Activated B cell treated with CpG ODN at 0.5 μM for 24 hours (primary cell): ENCODE measurements at regions of chr20 and their contacts with region 1.

Region 1: DNA sequence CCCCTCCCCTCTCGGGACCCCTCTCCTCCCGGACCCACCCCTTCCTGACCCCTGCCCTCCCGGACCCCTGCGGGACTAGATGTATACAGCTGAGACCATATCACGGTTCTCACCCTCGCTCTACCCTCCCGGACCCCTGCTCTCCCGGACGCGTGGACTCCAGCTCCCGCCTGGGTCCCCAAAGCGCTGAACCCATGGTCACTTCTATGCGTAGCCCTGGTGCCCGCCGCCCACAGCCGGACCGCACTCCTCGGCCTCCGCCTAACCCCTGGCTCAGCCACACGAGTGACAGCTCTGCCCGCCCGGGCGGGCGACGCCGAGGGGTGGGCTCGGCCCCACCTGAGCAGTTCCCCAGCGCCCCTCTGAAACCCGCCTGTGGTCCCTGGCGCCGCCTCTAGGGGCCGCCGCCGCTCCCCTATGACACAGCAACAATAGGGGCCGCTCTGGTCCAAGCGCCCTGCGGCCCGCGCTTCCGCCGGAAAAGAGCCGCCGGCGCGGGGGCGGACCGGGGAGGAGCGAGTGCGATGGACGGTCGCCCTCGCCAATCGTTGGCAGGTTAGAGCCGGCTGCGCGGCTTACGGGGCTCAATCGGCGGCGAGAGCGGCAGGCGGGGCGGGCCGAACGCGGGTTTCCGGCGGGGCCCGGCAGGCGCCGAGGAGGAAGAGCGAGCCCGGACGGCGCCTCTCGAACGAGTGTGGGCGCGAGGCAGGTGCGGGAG is at the start of gene ADRM1:
- DNase-seq: peak; percentile 99
- ATAC-seq: peak; percentile 86
- H3K4me3 Mint-ChIP-seq: peak within 1 kb of the TSS; percentile 92
- H3K27ac Mint-ChIP-seq: peak within 1 kb of the TSS; percentile 96
- H3K4me1 Mint-ChIP-seq: peaks cover 30% of the 10 kb centered on the region
- H3K27me3 Mint-ChIP-seq: no peaks in the 10 kb centered on the region
- CTCF ChIP-seq: peak; percentile 32
- total RNA-seq, gene ADRM1: 97.9 and 98.0 TPM in 2 replicates

Region 2: GRCh38 chr20:62010551-62011402 is 291.7 kb before region 1 on chr20:
- CTCF ChIA-PET with region 1: interaction called, 3 read pairs
- POLR2A ChIA-PET with region 1: no interaction called
- intact Hi-C with region 1: loop called (anchors 2 kb)
- DNase-seq: peak; percentile 27
- ATAC-seq: peak; percentile 65
- H3K4me3 Mint-ChIP-seq: no peak overlapping the region
- H3K27ac Mint-ChIP-seq: no peak overlapping the region
- H3K4me1 Mint-ChIP-seq: peaks cover 6% of the 10 kb centered on the region
- H3K27me3 Mint-ChIP-seq: no peaks in the 10 kb centered on the region
- CTCF ChIP-seq: no peak

Region 3: DNA sequence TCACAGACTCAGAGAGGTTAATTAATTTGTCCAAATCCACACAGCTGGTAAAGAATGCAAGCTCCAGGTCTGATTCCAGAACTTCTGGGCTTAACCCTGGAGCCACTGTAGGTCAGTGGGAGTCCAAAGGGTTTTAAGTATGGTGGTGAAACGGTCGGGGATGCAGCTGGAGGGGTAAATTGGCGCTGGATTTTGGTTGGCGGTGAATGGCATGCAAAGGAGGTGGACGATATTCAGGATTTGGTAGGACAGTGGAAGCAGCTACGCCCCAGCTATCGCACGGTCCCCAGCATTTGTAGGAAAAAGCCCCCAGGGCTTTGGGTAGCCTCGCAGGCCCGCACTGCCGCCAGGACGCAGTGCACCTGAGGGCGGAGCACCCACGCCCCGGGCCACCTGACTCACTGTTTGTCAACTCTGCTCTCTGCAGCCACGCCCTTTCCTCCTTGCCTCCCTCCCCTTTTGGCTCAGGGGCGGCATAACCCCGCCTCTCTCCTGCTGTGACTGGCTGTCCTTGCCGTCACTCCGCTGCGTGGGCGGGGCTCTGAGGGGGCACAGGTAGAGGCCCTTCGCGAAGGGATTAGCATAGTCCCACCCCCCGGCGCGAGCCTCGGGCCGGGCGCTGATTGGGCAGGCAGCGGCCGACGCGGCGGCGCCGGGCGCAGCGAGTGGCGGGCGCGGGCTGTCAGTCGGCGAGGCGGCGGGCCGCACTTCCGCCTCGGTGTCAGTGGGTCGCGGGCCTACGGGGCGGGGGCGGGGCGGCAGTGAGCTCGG is 64.5 kb before region 1 on chr20 and contains the start of gene OSBPL2:
- CTCF ChIA-PET with region 1: no interaction called
- POLR2A ChIA-PET with region 1: no interaction called
- intact Hi-C with region 1: loop called (anchors 1 kb)
- DNase-seq: peak; percentile 100
- ATAC-seq: peak; percentile 98
- H3K4me3 Mint-ChIP-seq: peak within 1 kb of the TSS; percentile 81
- H3K27ac Mint-ChIP-seq: peak within 1 kb of the TSS; percentile 89
- H3K4me1 Mint-ChIP-seq: peaks cover 34% of the 10 kb centered on the region
- H3K27me3 Mint-ChIP-seq: no peaks in the 10 kb centered on the region
- CTCF ChIP-seq: no peak
- total RNA-seq, gene OSBPL2: 40.3 and 43.0 TPM in 2 replicates

Region 4: DNA sequence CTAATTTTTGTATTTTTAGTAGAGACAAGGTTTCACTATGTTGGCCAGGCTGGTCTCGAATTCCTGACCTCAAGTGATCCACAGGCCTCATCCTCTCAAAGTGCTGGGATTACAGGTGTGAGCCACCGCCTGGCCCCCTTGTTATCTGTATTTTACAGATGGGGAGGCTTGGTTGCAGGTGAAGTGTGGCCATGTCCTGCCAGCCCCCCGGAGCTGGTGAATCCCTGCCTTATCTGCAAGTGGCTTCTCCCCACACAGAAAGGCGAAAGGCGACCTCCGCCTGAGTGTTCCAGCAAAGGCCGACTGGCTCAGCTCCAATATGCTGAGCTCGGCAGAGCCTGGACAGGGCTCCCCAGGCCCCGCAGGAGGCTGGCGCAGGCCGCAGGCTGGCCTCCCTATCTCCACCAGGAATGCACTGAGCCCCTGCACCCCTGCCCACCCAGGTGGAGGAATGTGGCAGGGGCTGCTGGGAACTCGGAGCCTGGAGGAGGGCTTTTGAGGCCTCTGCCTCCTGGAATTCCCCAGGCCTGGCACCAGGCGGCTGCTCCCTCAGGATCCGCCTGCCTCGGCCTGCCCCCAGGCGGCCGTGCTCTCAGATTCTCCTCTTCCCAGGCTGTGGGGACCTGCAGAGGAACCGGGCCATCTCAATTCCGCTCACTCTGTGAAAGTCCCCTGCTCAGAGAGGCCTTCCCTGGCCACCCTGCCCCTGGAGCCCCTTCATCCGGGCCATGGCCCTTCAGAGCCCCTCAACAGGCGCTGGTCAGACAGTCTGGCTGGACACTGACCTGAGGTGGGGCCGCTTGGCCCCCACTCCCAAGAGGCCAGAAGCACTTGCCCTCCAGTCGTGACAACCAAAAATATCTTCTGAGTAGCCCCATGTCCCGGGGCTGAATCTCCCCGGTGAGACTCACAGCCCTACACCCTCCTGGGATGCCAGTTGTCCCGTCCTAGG is 73.9 kb after region 1 on chr20:
- CTCF ChIA-PET with region 1: interaction called, 11 read pairs
- POLR2A ChIA-PET with region 1: interaction called, 5 read pairs
- intact Hi-C with region 1: loop called (anchors 2 kb)
- DNase-seq: no peak
- ATAC-seq: no peak
- H3K4me3 Mint-ChIP-seq: no peak overlapping the region
- H3K27ac Mint-ChIP-seq: no peak overlapping the region
- H3K4me1 Mint-ChIP-seq: peaks cover 5% of the 10 kb centered on the region
- H3K27me3 Mint-ChIP-seq: no peaks in the 10 kb centered on the region
- CTCF ChIP-seq: no peak

Region 5: DNA sequence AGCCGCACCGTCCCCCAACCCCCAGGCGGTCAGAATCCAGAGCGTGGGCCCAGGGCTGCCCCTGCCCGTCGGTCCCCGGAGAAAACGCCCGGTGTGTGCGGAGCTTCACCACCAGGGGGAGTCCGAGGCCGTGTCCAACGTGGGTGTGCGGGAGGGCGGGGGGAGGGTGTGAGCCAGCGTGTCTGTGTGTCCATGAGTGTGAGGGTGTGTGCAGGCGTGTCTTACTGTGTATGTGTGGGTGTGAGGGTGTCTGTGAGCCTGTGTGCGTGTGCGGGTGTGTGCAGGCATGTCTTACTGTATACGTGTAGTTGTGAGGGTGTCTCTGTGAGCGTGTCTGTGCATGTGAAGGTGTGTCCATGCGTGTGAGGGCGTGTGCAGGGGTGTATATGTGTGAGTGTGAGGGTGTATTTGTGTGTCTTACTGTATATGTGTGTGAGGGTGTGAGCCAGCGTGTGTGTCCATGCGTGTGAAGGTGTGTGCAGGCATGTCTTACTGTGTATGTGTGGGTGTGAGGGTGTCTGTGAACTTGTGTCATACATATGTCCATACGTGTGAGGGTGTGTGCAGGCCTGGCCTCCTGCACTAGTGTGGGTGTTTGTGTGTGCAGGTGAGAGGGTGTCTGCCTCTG is 197.9 kb after region 1 on chr20:
- CTCF ChIA-PET with region 1: interaction called, 3 read pairs
- POLR2A ChIA-PET with region 1: no interaction called
- intact Hi-C with region 1: loop called (anchors 1 kb)
- DNase-seq: peak; percentile 77
- ATAC-seq: peak; percentile 49
- H3K4me3 Mint-ChIP-seq: no peak overlapping the region
- H3K27ac Mint-ChIP-seq: peak overlapping the region; percentile 67
- H3K4me1 Mint-ChIP-seq: peaks cover 42% of the 10 kb centered on the region
- H3K27me3 Mint-ChIP-seq: no peaks in the 10 kb centered on the region
- CTCF ChIP-seq: peak; percentile 33

Region 6: DNA sequence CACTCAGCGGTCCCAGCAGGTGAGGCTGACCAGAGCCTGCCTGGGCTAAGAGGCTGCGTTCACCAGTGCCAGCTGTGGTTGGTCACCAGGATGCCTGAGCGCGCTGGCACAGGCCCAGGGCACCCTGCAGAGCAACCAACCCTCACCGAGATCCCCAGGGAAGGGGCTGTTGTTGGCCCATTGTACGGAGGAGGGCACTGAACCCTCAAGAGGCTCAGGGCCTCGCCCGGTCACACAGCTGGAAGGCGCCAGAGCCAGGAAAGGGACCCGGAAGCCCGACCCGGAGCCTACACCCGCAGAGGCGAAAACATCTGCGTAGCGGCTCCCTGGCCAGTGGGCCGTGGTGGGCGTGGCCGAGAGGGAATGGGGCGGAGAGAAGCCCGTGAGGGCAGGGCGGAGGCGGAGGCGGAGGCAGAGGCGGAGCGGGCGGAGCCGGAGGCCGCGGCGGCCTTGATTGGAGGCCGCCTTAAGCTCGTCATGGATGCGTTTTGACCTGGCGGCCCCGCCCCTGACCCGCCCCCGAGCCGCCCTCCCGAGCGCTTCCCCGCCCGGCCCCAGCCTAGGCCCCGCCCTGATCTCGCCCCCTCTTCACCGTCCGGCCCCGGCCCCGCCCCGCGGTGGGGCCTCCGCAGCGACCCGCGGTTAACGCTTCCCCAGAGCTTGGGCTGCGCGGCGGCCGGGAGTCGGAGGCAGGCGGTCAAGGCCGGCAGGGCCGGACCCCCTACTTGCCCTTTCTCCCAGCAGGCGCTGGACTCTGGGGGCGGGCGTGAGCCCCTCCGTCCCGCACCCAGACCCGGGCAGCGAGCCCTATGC is 491.6 kb after region 1 on chr20:
- CTCF ChIA-PET with region 1: no interaction called
- POLR2A ChIA-PET with region 1: interaction called, 7 read pairs
- intact Hi-C with region 1: loop called (anchors 1 kb)
- DNase-seq: peak; percentile 99
- ATAC-seq: peak; percentile 83
- H3K4me3 Mint-ChIP-seq: peak overlapping the region; percentile 82
- H3K27ac Mint-ChIP-seq: peak overlapping the region; percentile 92
- H3K4me1 Mint-ChIP-seq: peaks cover 44% of the 10 kb centered on the region
- H3K27me3 Mint-ChIP-seq: no peaks in the 10 kb centered on the region
- CTCF ChIP-seq: no peak

Region 7: GRCh38 chr20:62977613-62978560 is 675.4 kb after region 1 on chr20:
- CTCF ChIA-PET with region 1: no interaction called
- POLR2A ChIA-PET with region 1: no interaction called
- intact Hi-C with region 1: loop called (anchors 5 kb)
- DNase-seq: peak; percentile 84
- ATAC-seq: peak; percentile 81
- H3K4me3 Mint-ChIP-seq: peak overlapping the region; percentile 67
- H3K27ac Mint-ChIP-seq: peak overlapping the region; percentile 70
- H3K4me1 Mint-ChIP-seq: peaks cover 51% of the 10 kb centered on the region
- H3K27me3 Mint-ChIP-seq: peaks cover 23% of the 10 kb centered on the region
- CTCF ChIP-seq: no peak